ENCODE measurements at regions of chr18 and their contacts with region 1.

Region 1: GRCh38 chr18:56756966-56757365 is 105.8 kb downstream of the WDR7 start:
- DNase-seq: peak in 1 of 2 donors; percentile 14
- ATAC-seq: peak in 7 of 8 donors; percentile 27 to 73 (median 33)
- H3K4me3 ChIP-seq: no peak overlapping the region
- H3K27ac ChIP-seq: no peak overlapping the region
- H3K4me1 ChIP-seq: peaks cover 0 to 12% (median 0%) of the 10 kb centered on the region in 9 donors
- H3K27me3 ChIP-seq: no peaks in the 10 kb centered on the region
- CTCF ChIP-seq: no peak

Region 2: GRCh38 chr18:57343833-57344232 is 586.9 kb after region 1 on chr18:
- intact Hi-C with region 1: loop called in 1 of 10 experiments (anchors 5 kb)
- DNase-seq: no peak
- ATAC-seq: no peak
- H3K4me3 ChIP-seq: no peak overlapping the region
- H3K27ac ChIP-seq: no peak overlapping the region
- H3K4me1 ChIP-seq: no peaks in the 10 kb centered on the region
- H3K27me3 ChIP-seq: peaks cover 0 to 50% (median 9%) of the 10 kb centered on the region in 7 donors
- CTCF ChIP-seq: no peak